CD4-positive, alpha-beta T cell (primary cell): ENCODE measurements at regions of chr3 and their contacts with region 1.

Region 1: DNA sequence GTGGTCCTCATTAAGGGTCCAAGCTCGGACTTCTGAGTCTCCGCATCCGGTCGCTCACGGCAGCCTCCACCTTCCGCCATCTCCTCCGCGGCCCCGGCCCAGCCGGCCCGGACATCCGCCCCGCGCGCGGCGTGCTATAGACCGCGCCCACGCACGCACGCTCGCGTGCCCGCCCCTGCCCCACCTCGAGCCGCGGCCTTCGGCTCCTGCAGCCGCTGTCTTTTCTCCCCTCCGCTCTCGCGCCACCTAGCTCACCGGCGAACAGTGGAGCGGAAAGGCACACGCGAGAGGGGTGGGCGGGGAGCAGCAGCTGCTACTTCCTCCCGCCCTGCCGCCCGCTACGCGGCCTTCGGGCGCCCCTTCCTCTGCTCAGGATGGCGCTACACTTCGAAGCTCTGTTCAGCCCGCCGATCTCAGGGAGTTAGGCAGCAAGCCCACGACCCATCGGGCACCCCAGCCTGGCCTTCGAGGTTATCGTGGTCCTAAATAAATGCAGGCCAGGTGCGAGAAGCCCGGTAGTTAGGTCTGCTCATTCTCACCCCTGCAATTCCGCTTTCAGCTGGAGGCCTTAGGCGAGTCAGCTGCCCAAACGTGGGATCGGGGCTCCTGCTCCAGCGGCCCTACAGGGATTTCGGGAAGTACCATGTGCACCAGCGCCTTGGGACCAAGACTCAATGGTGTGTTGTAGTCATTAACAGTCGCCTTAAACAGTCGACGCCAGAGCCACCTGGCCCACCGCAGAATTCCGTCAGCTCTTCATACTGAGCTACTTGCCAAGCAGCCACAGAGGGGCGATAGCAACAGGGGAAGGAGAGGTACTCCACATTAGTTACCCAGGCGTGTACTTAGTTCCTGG is at the start of gene USP4:
- DNase-seq: peak; percentile 82 to 97 (median 92)
- ATAC-seq: peak; percentile 84
- H3K4me3 ChIP-seq: peak within 1 kb of the TSS; percentile 90
- H3K4me3 Mint-ChIP-seq: peak within 1 kb of the TSS; percentile 86
- H3K27ac ChIP-seq: peak within 1 kb of the TSS; percentile 95 to 98
- H3K27ac Mint-ChIP-seq: peak within 1 kb of the TSS; percentile 91
- H3K4me1 ChIP-seq: peaks cover 69% of the 10 kb centered on the region
- H3K4me1 Mint-ChIP-seq: peaks cover 53% of the 10 kb centered on the region
- H3K27me3 ChIP-seq: no peaks in the 10 kb centered on the region
- H3K27me3 Mint-ChIP-seq: no peaks in the 10 kb centered on the region
- CTCF ChIP-seq: peak; percentile 52
- total RNA-seq, gene USP4: 94.3 to 95.2 TPM

Region 2: GRCh38 chr3:49007068-49007770 is 333.0 kb before region 1 on chr3 and contains the start of gene WDR6:
- CTCF ChIA-PET with region 1: no interaction called
- POLR2A ChIA-PET with region 1: interaction called, 13 read pairs
- intact Hi-C with region 1: no loop called
- DNase-seq: peak; percentile 93 to 99 (median 96)
- ATAC-seq: peak; percentile 86
- H3K4me3 ChIP-seq: peak within 1 kb of the TSS; percentile 99
- H3K4me3 Mint-ChIP-seq: peak within 1 kb of the TSS; percentile 99
- H3K27ac ChIP-seq: peak within 1 kb of the TSS; percentile 89 to 99
- H3K27ac Mint-ChIP-seq: peak within 1 kb of the TSS; percentile 97
- H3K4me1 ChIP-seq: peaks cover 25% of the 10 kb centered on the region
- H3K4me1 Mint-ChIP-seq: peaks cover 27% of the 10 kb centered on the region
- H3K27me3 ChIP-seq: no peaks in the 10 kb centered on the region
- H3K27me3 Mint-ChIP-seq: no peaks in the 10 kb centered on the region
- CTCF ChIP-seq: peak; percentile 19
- total RNA-seq, gene WDR6: 132 to 134 TPM

Region 3: DNA sequence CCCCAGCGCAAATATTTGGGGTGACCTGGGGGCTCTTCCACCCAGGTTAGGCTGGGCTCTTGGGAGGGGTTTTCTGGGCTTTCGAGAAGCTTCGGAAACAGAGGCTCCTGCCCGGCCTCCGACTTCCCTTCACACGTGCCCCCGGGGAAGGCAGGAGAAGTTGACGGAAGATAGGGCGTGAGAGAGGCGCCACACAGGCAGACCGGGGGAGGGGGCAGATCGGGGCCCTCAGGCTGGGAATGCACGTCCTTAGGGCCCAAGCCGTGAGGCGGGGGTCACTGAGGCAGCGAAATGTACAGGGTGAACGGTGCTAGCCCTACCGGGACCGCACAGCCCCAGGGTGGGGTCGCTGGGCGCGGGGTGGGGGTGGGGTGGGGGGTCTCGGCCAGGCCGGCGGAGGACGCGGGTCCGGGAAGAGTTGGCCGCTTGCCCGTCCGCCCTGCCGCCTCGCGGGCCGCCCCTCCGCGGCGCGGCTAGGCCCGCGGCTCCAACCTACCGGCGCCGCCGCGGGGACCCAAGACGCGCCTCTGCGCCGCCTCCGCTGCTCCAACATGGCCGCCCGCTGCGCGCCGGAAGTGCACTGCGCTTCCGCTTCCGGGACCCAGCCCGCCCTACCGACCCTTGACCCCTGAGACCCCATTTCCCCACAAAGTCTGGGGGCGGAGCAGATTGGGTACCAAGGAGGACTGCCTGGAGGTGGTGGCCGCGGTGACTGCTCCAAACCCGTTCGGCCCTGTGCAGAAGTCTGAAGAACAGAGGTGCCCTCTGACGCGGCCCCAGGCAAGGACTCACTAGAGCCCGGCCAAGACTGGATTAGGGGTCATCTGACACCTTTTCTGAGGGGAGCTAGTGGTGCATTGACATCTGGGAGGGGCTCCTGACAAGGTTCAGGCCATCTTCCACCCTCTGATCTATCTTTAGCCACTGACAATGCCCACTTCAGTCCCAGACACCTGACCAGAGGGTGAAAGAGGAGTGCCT is 174.1 kb before region 1 on chr3 and contains the start of gene CCDC71:
- CTCF ChIA-PET with region 1: no interaction called
- POLR2A ChIA-PET with region 1: interaction called, 5 read pairs
- intact Hi-C with region 1: loop called in 1 of 2 experiments (anchors 2 kb)
- DNase-seq: peak; percentile 55 to 89 (median 70)
- ATAC-seq: peak; percentile 80
- H3K4me3 ChIP-seq: peak within 1 kb of the TSS; percentile 94
- H3K4me3 Mint-ChIP-seq: peak within 1 kb of the TSS; percentile 97
- H3K27ac ChIP-seq: peak within 1 kb of the TSS; percentile 48 to 61
- H3K27ac Mint-ChIP-seq: peak within 1 kb of the TSS; percentile 91
- H3K4me1 ChIP-seq: peaks cover 31% of the 10 kb centered on the region
- H3K4me1 Mint-ChIP-seq: peaks cover 44% of the 10 kb centered on the region
- H3K27me3 ChIP-seq: no peaks in the 10 kb centered on the region
- H3K27me3 Mint-ChIP-seq: no peaks in the 10 kb centered on the region
- CTCF ChIP-seq: no peak
- total RNA-seq, gene CCDC71: 14.7 to 16.0 TPM

Region 4: DNA sequence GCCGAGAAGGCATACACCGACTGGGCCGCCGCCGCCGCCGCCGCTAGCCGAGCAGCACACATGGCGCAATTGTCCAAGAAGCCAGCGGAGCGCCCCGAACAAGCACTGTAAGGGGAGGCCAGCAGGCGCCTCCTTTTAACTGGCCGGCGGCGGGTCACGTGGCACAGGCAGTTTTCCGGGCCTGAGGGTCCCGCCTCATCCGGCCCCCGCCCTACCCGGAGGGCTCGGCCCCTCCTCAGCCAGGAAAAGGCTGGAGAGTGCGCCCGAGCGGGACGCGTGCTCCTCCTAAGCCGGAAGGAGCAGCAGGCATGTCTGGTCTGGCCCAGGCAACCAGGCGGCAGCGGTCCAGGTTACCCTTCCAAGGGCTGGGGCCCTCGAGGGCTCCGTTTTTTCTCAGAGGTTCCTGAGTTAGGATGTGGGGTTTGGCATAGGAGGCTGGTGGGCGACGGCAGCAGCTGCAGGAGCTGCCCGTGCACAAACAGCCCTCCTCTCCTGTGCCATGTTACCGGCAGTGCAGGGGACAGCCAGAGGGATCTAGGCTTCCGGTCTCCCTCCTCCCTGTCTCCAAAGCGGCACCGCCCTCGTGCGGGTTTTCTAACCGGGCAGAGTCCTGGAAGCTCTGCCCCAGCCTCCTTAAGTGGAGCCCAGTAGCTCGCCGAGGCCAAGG is 18.2 kb after region 1 on chr3 and contains the start of gene GPX1:
- CTCF ChIA-PET with region 1: interaction called, 32 read pairs
- POLR2A ChIA-PET with region 1: interaction called, 68 read pairs
- intact Hi-C with region 1: loop called (anchors 1 kb)
- DNase-seq: peak; percentile 51 to 88 (median 71)
- ATAC-seq: peak; percentile 63
- H3K4me3 ChIP-seq: peak within 1 kb of the TSS; percentile 86
- H3K4me3 Mint-ChIP-seq: peak within 1 kb of the TSS; percentile 94
- H3K27ac ChIP-seq: peak within 1 kb of the TSS; percentile 56 to 78
- H3K27ac Mint-ChIP-seq: peak within 1 kb of the TSS; percentile 92
- H3K4me1 ChIP-seq: peaks cover 31% of the 10 kb centered on the region
- H3K4me1 Mint-ChIP-seq: peaks cover 31% of the 10 kb centered on the region
- H3K27me3 ChIP-seq: no peaks in the 10 kb centered on the region
- H3K27me3 Mint-ChIP-seq: no peaks in the 10 kb centered on the region
- CTCF ChIP-seq: no peak
- total RNA-seq, gene GPX1: 20.8 to 22.9 TPM

Region 5: GRCh38 chr3:49428697-49429100 is 88.5 kb after region 1 on chr3:
- CTCF ChIA-PET with region 1: interaction called, 5 read pairs
- POLR2A ChIA-PET with region 1: interaction called, 67 read pairs
- intact Hi-C with region 1: loop called (anchors 1 to 5 kb)
- DNase-seq: peak in 2 of 14 experiments; percentile 24 to 32
- ATAC-seq: peak; percentile 2
- H3K4me3 ChIP-seq: peak overlapping the region; percentile 60
- H3K4me3 Mint-ChIP-seq: peak overlapping the region; percentile 95
- H3K27ac ChIP-seq: peak overlapping the region; percentile 66 to 85
- H3K27ac Mint-ChIP-seq: peak overlapping the region; percentile 89
- H3K4me1 ChIP-seq: peaks cover 33% of the 10 kb centered on the region
- H3K4me1 Mint-ChIP-seq: peaks cover 32% of the 10 kb centered on the region
- H3K27me3 ChIP-seq: no peaks in the 10 kb centered on the region
- H3K27me3 Mint-ChIP-seq: no peaks in the 10 kb centered on the region
- CTCF ChIP-seq: no peak

Region 6: DNA sequence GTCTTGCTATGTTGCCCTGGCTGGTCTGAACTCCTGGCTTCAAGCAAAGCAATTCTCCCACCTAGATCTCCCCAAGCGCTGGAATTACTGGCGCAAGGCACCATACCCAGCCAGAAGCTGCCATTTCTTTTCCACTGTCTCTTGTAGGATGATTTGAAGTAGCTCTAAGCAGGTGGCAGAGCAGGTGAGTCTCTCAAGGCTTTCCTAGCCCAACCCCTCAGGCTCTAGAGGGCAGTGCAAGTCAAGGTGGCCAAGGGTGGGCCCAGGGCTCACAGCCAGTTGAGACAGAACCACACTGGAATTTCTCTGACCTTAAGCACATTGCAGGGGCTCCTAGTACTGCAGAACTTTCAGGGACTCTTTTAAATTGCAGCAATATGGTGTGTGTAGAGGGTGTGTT is 114.3 kb after region 1 on chr3:
- CTCF ChIA-PET with region 1: interaction called, 22 read pairs
- POLR2A ChIA-PET with region 1: interaction called, 35 read pairs
- intact Hi-C with region 1: loop called (anchors 1 kb)
- DNase-seq: peak in 1 of 14 experiments; percentile 7
- ATAC-seq: no peak
- H3K4me3 ChIP-seq: no peak overlapping the region
- H3K4me3 Mint-ChIP-seq: no peak overlapping the region
- H3K27ac ChIP-seq: no peak overlapping the region
- H3K27ac Mint-ChIP-seq: no peak overlapping the region
- H3K4me1 ChIP-seq: no peaks in the 10 kb centered on the region
- H3K4me1 Mint-ChIP-seq: no peaks in the 10 kb centered on the region
- H3K27me3 ChIP-seq: no peaks in the 10 kb centered on the region
- H3K27me3 Mint-ChIP-seq: no peaks in the 10 kb centered on the region
- CTCF ChIP-seq: no peak

Region 7: GRCh38 chr3:49673715-49674496 is 333.7 kb after region 1 on chr3 and contains the start of gene APEH:
- CTCF ChIA-PET with region 1: no interaction called
- POLR2A ChIA-PET with region 1: no interaction called
- intact Hi-C with region 1: loop called in 1 of 2 experiments (anchors 5 kb)
- DNase-seq: peak; percentile 92 to 98 (median 96)
- ATAC-seq: peak; percentile 86
- H3K4me3 ChIP-seq: peak within 1 kb of the TSS; percentile 81
- H3K4me3 Mint-ChIP-seq: peak within 1 kb of the TSS; percentile 97
- H3K27ac ChIP-seq: peak within 1 kb of the TSS; percentile 91 to 96
- H3K27ac Mint-ChIP-seq: peak within 1 kb of the TSS; percentile 97
- H3K4me1 ChIP-seq: peaks cover 47% of the 10 kb centered on the region
- H3K4me1 Mint-ChIP-seq: peaks cover 50% of the 10 kb centered on the region
- H3K27me3 ChIP-seq: no peaks in the 10 kb centered on the region
- H3K27me3 Mint-ChIP-seq: no peaks in the 10 kb centered on the region
- CTCF ChIP-seq: no peak
- total RNA-seq, gene APEH: 44.3 to 45.5 TPM